ENCODE measurements at regions of chr6 and their contacts with region 1.

Region 1: GRCh38 chr6:39302669-39303424 is 11.4 kb downstream of the KCNK17 start:
- DNase-seq: peak; percentile 88 to 94
- H3K4me3 ChIP-seq: no peak overlapping the region
- H3K27ac ChIP-seq: no peak overlapping the region
- H3K4me1 ChIP-seq: peaks cover 0 to 13% (median 6%) of the 10 kb centered on the region in 4 donors
- H3K27me3 ChIP-seq: peaks cover 0 to 11% (median 0%) of the 10 kb centered on the region in 3 donors
- CTCF ChIP-seq: peak in 5 of 7 experiments; percentile 70 to 93 (median 87)
- EP300 ChIP-seq: no peak
- POLR2A ChIP-seq: no peak

Region 2: DNA sequence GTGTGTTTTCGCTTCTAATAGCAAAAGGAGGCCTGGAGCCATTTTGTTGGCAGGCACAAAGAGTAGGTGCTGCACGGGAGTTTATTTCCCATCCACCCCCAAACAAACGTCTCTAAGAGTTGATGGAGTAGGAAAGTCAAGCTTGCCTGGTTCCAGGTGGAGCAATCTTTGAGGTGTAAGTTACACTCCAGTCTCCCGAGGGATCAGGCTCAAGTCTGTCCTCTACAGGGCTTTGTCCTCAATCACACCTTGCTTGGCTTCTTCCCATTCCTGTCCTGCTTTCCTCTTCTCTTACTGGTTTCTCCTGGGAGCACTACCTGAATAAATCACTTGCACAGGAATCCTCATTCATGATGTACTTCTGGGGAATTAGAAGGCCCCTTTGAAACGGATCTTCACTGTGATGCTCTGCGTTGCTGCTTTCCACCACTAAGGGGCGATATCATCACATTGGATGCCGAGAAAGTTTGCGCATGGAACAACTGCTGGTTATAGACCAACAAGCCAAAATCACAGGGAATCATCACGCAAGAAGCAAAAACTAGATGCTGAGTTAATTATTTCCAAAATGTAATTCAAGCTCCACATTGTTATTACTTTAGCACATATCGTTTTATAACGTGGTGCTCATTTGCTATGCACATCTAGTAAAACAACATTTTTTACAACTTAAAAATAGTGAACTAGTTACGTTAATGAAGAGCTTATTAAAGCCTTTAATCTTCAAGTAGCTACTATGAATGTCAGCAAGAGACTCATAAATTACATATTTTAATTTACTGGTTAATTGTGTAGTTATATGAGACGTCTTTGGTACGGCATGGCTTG is 430.9 kb before region 1 on chr6:
- intact Hi-C with region 1: loop called (anchors 10 kb)
- DNase-seq: peak; percentile 61 to 79
- H3K4me3 ChIP-seq: no peak overlapping the region
- H3K27ac ChIP-seq: no peak overlapping the region
- H3K4me1 ChIP-seq: no peaks in the 10 kb centered on the region
- H3K27me3 ChIP-seq: peaks cover 0 to 12% (median 0%) of the 10 kb centered on the region in 3 donors
- CTCF ChIP-seq: peak in 6 of 7 experiments; percentile 61 to 88 (median 79)
- EP300 ChIP-seq: no peak
- POLR2A ChIP-seq: no peak

Region 3: DNA sequence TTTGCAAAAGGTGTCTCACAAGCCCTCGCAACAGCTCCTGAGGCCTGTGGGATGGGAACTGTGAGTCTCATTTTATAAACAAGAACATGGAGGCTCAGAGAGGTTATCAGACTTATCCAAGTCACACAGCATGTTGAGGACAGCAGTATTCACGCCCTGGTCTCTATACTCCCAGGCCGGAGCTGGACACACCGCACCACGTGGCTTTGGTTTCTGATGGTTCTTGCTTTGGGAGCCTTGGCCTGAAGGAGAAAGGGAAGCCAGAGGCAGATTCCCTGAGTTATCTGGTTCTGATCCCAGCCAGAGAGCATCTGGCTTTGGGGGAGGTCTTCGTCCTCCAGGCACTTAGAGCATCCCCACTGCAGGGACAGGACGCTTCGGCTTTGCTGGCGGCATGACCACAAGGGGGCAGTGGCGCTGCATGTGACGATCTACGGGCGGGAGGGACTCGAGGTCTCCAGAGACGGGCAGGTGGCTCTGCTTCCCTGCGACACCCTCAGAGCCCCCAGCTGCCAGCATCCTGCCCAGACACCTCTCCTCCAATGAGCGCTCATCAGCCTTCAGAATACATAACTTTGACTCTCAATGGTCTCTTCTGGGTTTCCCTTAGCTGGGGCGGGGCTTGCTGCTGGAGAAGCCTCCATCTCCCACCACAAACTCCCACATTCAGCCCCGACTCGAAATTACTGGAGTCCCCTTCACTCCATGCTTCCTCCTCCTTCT is 136.5 kb before region 1 on chr6:
- intact Hi-C with region 1: loop called (anchors 5 kb)
- DNase-seq: peak; percentile 81 to 92
- H3K4me3 ChIP-seq: no peak overlapping the region
- H3K27ac ChIP-seq: no peak overlapping the region
- H3K4me1 ChIP-seq: peaks cover 6 to 22% (median 11%) of the 10 kb centered on the region in 4 donors
- H3K27me3 ChIP-seq: peaks cover 0 to 21% (median 0%) of the 10 kb centered on the region in 3 donors
- CTCF ChIP-seq: peak in 6 of 7 experiments; percentile 28 to 90 (median 82)
- EP300 ChIP-seq: no peak
- POLR2A ChIP-seq: no peak